ENCODE measurements at regions of chr3 and their contacts with region 1.

Region 1: DNA sequence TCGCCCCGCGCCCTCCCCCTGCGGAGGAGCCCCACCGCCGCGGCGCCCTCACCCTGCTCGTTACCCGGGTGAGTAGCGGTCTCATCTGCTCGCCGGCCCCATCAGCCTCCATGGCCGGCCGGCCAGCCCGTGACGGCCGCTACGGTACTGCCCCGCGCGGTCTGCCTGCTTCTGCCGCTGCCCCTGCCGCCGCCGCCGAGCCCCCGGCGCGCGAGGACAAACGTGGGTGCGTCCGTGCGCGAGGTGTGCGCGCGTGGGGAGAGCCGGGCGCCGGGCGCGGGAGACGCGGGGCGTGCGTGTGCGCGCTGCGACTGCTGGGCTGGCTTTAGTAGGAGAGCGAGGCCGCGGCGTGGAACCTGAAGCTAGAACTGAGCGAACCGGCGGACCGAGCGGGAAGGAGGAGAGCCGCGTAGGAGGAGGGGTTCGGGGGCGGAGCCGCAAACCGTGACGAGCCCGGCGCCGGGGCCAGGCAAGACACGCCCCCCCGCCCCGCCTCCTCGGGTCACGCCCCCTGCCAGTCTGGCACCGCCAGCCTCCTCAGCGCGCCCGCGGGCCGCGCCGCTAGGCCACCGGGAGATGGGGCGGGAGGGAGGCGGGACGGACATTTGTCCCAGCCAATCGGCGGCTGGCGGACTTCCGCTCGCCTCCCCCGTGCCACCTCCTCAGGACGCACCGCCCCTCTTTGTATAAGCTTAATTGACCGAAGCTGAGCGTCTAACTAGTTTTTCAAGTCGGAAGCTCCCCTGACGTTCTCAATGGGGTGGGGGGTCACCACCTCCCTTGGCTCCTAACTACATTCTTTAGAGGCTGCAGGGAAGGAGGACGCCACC is at the start of gene SLC4A7:
- DNase-seq: peak; percentile 94
- ATAC-seq: peak; percentile 96
- H3K4me3 ChIP-seq: peak within 1 kb of the TSS; percentile 62
- H3K27ac ChIP-seq: peak within 1 kb of the TSS; percentile 90
- H3K4me1 ChIP-seq: peaks cover 2% of the 10 kb centered on the region; the same call in 1 of the 2 replicates
- H3K27me3 ChIP-seq: no peaks in the 10 kb centered on the region
- CTCF ChIP-seq: no peak
- POLR2A ChIP-seq: peak; percentile 96
- RAD21 ChIP-seq: peak; percentile 17
- total RNA-seq, gene SLC4A7: 50.4 and 86.7 TPM in 2 replicates

Region 2: GRCh38 chr3:27022096-27022761 is 462.0 kb before region 1 on chr3:
- CTCF ChIA-PET with region 1: no interaction called
- POLR2A ChIA-PET with region 1: no interaction called
- dilution Hi-C with region 1: no loop called
- in situ Hi-C with region 1: no loop called
- intact Hi-C with region 1: no loop called
- DNase-seq: no peak
- ATAC-seq: no peak
- H3K4me3 ChIP-seq: no peak overlapping the region
- H3K27ac ChIP-seq: no peak overlapping the region
- H3K4me1 ChIP-seq: no peaks in the 10 kb centered on the region
- H3K27me3 ChIP-seq: no peaks in the 10 kb centered on the region
- CTCF ChIP-seq: no peak
- POLR2A ChIP-seq: no peak
- RAD21 ChIP-seq: no peak

Region 3: GRCh38 chr3:27134165-27134796 is 349.9 kb before region 1 on chr3:
- CTCF ChIA-PET with region 1: no interaction called
- POLR2A ChIA-PET with region 1: no interaction called
- dilution Hi-C with region 1: no loop called
- in situ Hi-C with region 1: loop called (anchors 10 kb)
- intact Hi-C with region 1: no loop called
- DNase-seq: peak; percentile 66
- ATAC-seq: peak; percentile 86
- H3K4me3 ChIP-seq: no peak overlapping the region
- H3K27ac ChIP-seq: no peak overlapping the region
- H3K4me1 ChIP-seq: no peaks in the 10 kb centered on the region
- H3K27me3 ChIP-seq: no peaks in the 10 kb centered on the region
- CTCF ChIP-seq: peak; percentile 91
- POLR2A ChIP-seq: no peak
- RAD21 ChIP-seq: peak; percentile 91

Region 4: DNA sequence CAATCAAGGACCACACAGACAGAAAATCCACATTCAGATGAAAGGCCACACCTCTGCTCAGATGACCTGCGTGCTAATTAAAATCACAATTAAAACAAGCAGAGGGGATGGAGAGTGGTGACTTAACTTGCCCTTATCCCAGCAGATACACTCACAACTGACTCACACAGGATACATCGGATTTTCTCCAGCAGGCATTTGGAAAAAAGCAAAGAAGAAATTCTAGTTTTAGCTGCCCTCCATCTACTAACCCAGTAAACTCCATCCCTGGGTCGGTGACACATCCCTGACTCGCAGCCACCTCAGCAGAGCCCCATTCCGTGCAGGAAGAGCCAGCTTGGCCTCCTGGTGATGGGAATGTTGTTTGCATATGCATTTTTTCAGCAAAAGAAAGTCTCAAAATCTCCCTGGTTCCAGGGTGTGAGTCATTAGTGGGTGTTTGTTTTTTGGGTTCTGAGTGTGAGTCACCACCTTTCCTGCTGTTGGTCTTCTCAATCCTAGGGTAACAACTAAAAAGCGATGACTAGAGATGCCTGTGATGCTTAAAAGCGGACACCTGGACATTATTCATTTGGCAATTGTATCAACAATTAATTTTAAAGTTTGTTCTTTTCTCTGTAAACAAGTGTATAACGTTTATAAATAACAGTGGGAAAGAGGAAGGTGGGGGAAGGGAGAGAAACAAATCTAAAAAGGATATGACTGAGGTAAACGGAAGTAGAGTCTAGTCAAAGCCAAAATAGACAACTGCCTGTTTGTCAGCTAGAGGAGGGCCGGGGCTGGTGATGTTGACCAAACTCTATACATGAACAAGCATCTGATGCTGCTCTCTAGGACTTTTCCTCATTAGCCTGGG is 49.7 kb after region 1 on chr3:
- CTCF ChIA-PET with region 1: no interaction called
- POLR2A ChIA-PET with region 1: no interaction called
- dilution Hi-C with region 1: no loop called
- in situ Hi-C with region 1: loop called (anchors 5 kb)
- intact Hi-C with region 1: loop called (anchors 2 kb)
- DNase-seq: peak; percentile 99
- ATAC-seq: peak; percentile 93
- H3K4me3 ChIP-seq: no peak overlapping the region
- H3K27ac ChIP-seq: peak overlapping the region; percentile 77
- H3K4me1 ChIP-seq: peaks cover 21% of the 10 kb centered on the region
- H3K27me3 ChIP-seq: no peaks in the 10 kb centered on the region
- CTCF ChIP-seq: peak; percentile 76
- POLR2A ChIP-seq: no peak
- RAD21 ChIP-seq: peak; percentile 72

Region 5: GRCh38 chr3:27659279-27660021 is 175.2 kb after region 1 on chr3:
- CTCF ChIA-PET with region 1: no interaction called
- POLR2A ChIA-PET with region 1: no interaction called
- dilution Hi-C with region 1: no loop called
- in situ Hi-C with region 1: no loop called
- intact Hi-C with region 1: loop called (anchors 1 kb)
- DNase-seq: peak; percentile 47
- ATAC-seq: peak; percentile 84
- H3K4me3 ChIP-seq: no peak overlapping the region
- H3K27ac ChIP-seq: no peak overlapping the region
- H3K4me1 ChIP-seq: peaks cover 2% of the 10 kb centered on the region; the same call in 1 of the 2 replicates
- H3K27me3 ChIP-seq: no peaks in the 10 kb centered on the region
- CTCF ChIP-seq: peak; percentile 69
- POLR2A ChIP-seq: no peak
- RAD21 ChIP-seq: peak; percentile 72

Region 6: DNA sequence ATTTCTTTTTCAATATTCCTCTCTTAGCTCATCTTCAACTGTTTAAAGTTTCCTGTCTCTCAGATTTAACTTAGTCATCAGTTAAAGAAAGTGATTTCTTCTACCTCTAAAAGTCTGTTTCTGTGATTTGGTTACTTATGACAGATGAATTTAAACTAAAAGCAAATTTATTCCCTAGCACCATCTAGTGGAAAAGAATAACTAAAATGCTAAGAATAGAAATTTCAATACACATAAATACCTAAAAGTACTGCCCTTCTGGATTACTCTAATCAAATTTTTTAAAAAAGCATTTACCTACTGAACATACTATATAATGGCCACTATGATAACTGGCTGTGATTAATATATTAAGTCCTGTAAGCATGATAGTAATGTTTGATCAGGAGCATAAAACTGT is 850.3 kb after region 1 on chr3:
- CTCF ChIA-PET with region 1: no interaction called
- POLR2A ChIA-PET with region 1: no interaction called
- dilution Hi-C with region 1: no loop called
- in situ Hi-C with region 1: no loop called
- intact Hi-C with region 1: loop called (anchors 10 kb)
- DNase-seq: peak; percentile 4
- ATAC-seq: peak; percentile 37; the same call in 1 of the 2 replicates
- H3K4me3 ChIP-seq: no peak overlapping the region
- H3K27ac ChIP-seq: no peak overlapping the region
- H3K4me1 ChIP-seq: no peaks in the 10 kb centered on the region
- H3K27me3 ChIP-seq: no peaks in the 10 kb centered on the region
- CTCF ChIP-seq: peak; percentile 27; the same call in 1 of the 2 replicates
- POLR2A ChIP-seq: no peak
- RAD21 ChIP-seq: no peak